ENCODE measurements at regions of chr20 and their contacts with region 1.

Region 1: DNA sequence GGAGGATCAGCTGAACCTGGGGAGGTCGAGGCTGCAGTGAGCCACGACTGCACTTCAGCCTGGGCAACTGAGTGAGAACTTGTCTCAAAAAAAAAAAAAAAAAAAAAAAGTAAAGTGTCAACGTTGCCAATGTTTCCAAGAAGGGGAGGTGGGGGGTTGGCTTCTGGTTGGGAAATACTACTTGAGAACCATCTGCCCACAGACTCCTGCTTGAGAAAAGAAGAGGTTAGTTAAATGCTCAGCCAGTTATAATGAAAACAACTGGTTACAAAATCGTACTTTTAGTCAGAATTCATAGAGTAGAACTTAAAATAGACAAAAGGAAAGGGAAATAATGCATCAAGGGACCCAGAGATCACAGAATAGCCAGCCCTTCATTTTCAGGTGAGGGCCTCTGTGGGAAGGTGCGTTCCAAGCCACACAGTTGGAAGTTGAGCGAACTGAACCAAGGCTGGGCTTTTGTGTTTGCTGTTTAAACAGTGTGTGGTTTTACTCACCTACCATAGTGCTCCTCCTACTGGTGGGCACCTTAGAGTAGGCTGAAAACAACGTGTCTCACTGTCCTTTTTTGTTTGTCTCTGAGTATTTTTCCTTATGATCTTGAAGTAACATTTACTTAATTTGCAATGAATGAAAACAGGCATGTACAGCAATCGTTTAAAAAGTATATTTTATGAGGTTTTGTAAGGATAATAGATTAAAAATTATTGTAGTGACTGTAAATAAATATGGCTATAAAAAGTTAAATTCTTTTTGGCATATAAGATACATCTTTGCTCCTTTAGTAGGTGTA is 200.7 kb downstream of the BCAS1 start:
- DNase-seq: peak; percentile 87
- H3K4me3 Mint-ChIP-seq: peak overlapping the region; percentile 52
- H3K27ac Mint-ChIP-seq: peak overlapping the region; percentile 77
- H3K4me1 Mint-ChIP-seq: peaks cover 68% of the 10 kb centered on the region
- H3K27me3 Mint-ChIP-seq: no peaks in the 10 kb centered on the region

Region 2: DNA sequence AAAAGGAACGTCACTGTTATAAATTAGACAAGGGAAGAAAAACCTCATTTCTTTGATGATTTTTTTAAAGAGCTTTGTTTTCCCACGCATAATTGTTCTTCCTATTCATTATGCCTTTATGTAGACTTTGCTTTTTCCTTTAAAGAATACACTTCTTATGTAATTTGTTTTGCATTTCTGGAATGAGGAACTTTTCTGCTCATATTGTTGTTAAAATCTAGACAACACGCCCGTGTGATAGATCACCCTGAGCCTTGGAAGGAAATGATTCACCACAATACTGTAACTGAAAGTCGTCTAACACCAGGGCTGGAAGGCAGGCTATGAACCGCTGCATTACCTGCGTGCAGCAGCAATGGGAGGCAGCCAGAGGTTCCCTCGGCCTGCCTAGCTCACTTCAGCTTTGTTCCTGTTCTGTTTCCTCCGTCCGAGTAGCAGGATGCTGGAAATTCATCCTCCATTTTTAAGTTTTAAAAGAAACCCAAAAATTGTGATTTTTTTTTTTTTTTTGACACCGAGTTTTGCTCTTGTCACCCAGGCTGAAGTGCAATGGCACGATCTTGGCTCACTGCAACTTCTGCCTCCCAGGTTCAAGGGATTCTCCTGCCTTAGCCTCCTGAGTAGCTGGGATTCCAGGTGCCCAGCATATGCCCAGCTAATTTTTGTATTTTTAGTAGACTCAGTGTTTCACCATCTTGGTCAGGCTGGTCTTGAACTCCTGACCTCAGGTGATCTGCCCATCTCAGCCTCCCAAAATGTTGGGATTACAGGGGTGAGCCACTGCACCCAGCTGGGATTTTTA is 226.4 kb before region 1 on chr20:
- CTCF ChIA-PET with region 1: no interaction called
- POLR2A ChIA-PET with region 1: interaction called, 3 read pairs
- intact Hi-C with region 1: loop called (anchors 5 kb)
- DNase-seq: peak; percentile 76
- H3K4me3 Mint-ChIP-seq: peak overlapping the region; percentile 68
- H3K27ac Mint-ChIP-seq: peak overlapping the region; percentile 88
- H3K4me1 Mint-ChIP-seq: peaks cover 28% of the 10 kb centered on the region
- H3K27me3 Mint-ChIP-seq: no peaks in the 10 kb centered on the region

Region 3: GRCh38 chr20:53750827-53751619 is 118.6 kb before region 1 on chr20:
- CTCF ChIA-PET with region 1: no interaction called
- POLR2A ChIA-PET with region 1: interaction called, 3 read pairs
- intact Hi-C with region 1: loop called (anchors 1 kb)
- DNase-seq: peak; percentile 53
- H3K4me3 Mint-ChIP-seq: peak overlapping the region; percentile 45
- H3K27ac Mint-ChIP-seq: peak overlapping the region; percentile 95
- H3K4me1 Mint-ChIP-seq: peaks cover 60% of the 10 kb centered on the region
- H3K27me3 Mint-ChIP-seq: no peaks in the 10 kb centered on the region

Region 4: GRCh38 chr20:53839423-53840176 is 30.1 kb before region 1 on chr20:
- CTCF ChIA-PET with region 1: interaction called, 4 read pairs
- POLR2A ChIA-PET with region 1: interaction called, 3 read pairs
- intact Hi-C with region 1: loop called (anchors 1 kb)
- DNase-seq: peak; percentile 66
- H3K4me3 Mint-ChIP-seq: peak overlapping the region; percentile 58
- H3K27ac Mint-ChIP-seq: peak overlapping the region; percentile 76
- H3K4me1 Mint-ChIP-seq: peaks cover 64% of the 10 kb centered on the region
- H3K27me3 Mint-ChIP-seq: no peaks in the 10 kb centered on the region

Region 5: DNA sequence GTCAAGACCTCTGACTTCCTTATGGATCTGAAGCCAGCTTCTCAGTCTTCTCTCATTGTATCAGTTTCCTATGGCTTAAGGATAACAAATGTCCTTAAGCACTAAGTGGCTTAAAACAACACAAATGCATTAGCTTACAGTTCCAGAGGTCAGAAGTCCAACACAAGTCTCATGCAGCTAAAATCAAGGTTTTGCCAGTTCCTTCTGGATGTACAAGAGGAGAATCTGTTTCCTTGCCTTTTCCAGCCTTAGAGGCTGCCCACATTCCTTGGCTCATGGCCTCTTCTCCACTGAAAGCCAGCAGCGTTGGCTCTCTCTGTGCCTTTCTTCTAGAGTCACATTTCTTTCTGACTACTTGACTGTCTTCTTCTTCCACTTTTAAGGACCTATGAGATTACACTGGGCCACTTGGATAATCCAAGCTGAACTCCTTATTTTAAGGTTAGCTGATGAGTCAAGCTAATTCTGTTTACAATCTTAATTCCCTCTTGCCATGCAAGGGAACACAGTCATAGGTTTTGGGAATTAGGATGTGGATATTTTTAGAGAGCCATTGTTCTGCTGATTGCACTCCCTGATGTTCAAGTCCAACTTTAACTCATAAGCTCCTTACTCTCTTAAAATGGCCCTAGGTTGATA is 21.8 kb after region 1 on chr20:
- CTCF ChIA-PET with region 1: interaction called, 5 read pairs
- POLR2A ChIA-PET with region 1: interaction called, 3 read pairs
- intact Hi-C with region 1: loop called (anchors 1 kb)
- DNase-seq: no peak
- H3K4me3 Mint-ChIP-seq: no peak overlapping the region
- H3K27ac Mint-ChIP-seq: no peak overlapping the region
- H3K4me1 Mint-ChIP-seq: peaks cover 30% of the 10 kb centered on the region
- H3K27me3 Mint-ChIP-seq: no peaks in the 10 kb centered on the region

Measured in activated CD4-positive, alpha-beta memory T cell treated with anti-CD3 and anti-CD28 coated beads for 36 hours (primary cell).